ENCODE measurements at regions of chr21 and their contacts with region 1.

Region 1: GRCh38 chr21:35150562-35151226 is 101.6 kb upstream of the RUNX1 start:
- DNase-seq: peak; percentile 63
- ATAC-seq: peak; percentile 77
- H3K4me3 ChIP-seq: no peak overlapping the region
- H3K27ac ChIP-seq: peak overlapping the region; percentile 72
- H3K4me1 ChIP-seq: peaks cover 62% of the 10 kb centered on the region
- H3K27me3 ChIP-seq: no peaks in the 10 kb centered on the region
- CTCF ChIP-seq: no peak

Region 2: GRCh38 chr21:35084869-35085268 is 65.8 kb before region 1 on chr21:
- CTCF ChIA-PET with region 1: no interaction called
- POLR2A ChIA-PET with region 1: no interaction called
- intact Hi-C with region 1: no loop called
- DNase-seq: peak; percentile 95
- ATAC-seq: peak; percentile 82
- H3K4me3 ChIP-seq: no peak overlapping the region
- H3K27ac ChIP-seq: peak overlapping the region; percentile 71
- H3K4me1 ChIP-seq: peaks cover 49% of the 10 kb centered on the region
- H3K27me3 ChIP-seq: no peaks in the 10 kb centered on the region
- CTCF ChIP-seq: no peak

Region 3: GRCh38 chr21:35198031-35198431 is 47.3 kb after region 1 on chr21:
- CTCF ChIA-PET with region 1: no interaction called
- POLR2A ChIA-PET with region 1: no interaction called
- intact Hi-C with region 1: loop called (anchors 1 kb)
- DNase-seq: peak; percentile 99
- ATAC-seq: peak; percentile 89
- H3K4me3 ChIP-seq: no peak overlapping the region
- H3K27ac ChIP-seq: peak overlapping the region; percentile 91
- H3K4me1 ChIP-seq: peaks cover 60% of the 10 kb centered on the region
- H3K27me3 ChIP-seq: no peaks in the 10 kb centered on the region
- CTCF ChIP-seq: no peak

Region 4: DNA sequence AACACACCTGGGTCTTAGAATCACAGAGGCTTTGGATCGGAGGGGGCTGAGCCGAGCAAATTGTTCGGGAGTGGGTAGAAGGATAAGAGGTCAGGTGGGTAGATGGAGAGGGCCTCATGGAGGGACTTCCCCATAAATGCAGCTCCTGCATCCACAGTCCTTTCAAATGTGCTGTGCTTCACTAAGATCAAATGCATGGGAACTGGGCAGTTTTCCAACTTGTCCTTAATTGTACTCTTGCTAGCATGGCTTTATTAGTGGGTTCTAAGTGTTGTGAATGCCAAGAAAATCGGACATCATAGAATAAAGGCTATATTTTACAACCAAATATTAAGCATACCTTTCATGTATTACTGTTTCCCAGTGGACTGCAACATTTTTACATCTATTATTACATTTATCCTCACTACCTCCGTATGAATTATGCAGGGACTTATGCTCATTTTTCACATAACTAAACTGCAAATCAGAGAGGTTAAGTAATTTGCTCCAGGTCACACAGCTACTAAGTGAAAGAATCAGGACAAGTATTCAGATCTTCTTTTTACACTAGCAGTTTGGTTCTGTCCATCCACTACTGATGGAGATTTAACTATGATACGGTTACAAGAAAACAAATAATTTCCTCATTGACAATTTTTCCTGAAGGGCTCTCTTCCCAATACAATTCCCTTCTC is 72.9 kb after region 1 on chr21:
- CTCF ChIA-PET with region 1: no interaction called
- POLR2A ChIA-PET with region 1: interaction called, 11 read pairs
- intact Hi-C with region 1: no loop called
- DNase-seq: no peak
- ATAC-seq: no peak
- H3K4me3 ChIP-seq: no peak overlapping the region
- H3K27ac ChIP-seq: peak overlapping the region; percentile 39
- H3K4me1 ChIP-seq: peaks cover 40% of the 10 kb centered on the region
- H3K27me3 ChIP-seq: no peaks in the 10 kb centered on the region
- CTCF ChIP-seq: no peak

Measured in PC-3 (cell line).